A673 (cell line): ENCODE measurements at regions of chr16 and their contacts with region 1.

Region 1: DNA sequence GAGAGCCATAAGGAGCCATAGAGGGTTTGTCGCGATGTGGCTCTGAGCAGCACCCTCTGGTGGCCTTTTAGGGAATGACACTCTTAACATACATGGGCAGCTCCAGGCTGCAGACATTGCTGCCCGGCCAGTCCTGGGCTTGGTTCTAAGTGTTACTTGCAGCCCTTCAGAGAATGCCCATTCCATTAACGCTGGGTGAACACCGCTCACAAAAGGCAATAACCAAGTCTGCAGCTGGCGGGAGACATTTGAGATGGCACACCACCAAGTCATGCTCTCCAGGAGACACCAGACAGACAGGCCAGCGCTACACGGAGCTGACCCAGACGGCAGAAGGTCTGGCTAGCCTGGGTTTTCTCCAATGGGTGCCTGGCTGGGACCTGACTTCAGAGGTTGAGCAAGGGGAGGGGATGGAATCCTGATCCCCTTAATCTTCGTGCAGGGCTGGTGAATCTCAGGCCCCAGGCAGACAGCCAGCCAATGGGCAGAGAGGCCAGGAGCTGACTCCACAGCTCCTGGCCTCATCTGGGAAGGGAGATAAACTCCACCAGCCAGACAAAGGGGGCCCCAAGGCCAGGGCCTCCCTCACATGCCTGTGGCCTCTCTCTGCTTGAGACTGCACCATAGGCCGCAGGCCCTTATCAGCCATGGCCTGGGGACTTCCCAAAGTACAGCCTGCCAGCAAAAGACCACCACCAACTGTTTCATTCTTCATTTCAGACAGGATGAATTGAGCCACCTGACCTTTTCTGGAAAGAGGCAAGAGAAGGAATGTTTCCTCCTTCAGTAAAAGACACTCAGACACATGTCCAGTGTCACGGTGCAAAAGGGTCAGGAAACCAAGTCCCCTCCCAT is 58.8 kb downstream of the ZDHHC7 start:
- DNase-seq: peak; percentile 83
- H3K4me3 ChIP-seq: no peak overlapping the region
- H3K27ac ChIP-seq: no peak overlapping the region
- H3K4me1 ChIP-seq: no peaks in the 10 kb centered on the region
- H3K27me3 ChIP-seq: no peaks in the 10 kb centered on the region
- CTCF ChIP-seq: peak; percentile 79

Region 2: GRCh38 chr16:84617791-84618580 is 334.6 kb before region 1 on chr16 and contains the start of gene COTL1:
- CTCF ChIA-PET with region 1: interaction called, 5 read pairs
- POLR2A ChIA-PET with region 1: no interaction called
- intact Hi-C with region 1: loop called (anchors 1 kb)
- DNase-seq: peak; percentile 98
- H3K4me3 ChIP-seq: peak within 1 kb of the TSS; percentile 68
- H3K27ac ChIP-seq: no peak within 1 kb of the TSS
- H3K4me1 ChIP-seq: peaks cover 25% of the 10 kb centered on the region
- H3K27me3 ChIP-seq: no peaks in the 10 kb centered on the region
- CTCF ChIP-seq: no peak
- total RNA-seq, gene COTL1: 34.1 and 35.9 TPM in 2 replicates

Region 3: DNA sequence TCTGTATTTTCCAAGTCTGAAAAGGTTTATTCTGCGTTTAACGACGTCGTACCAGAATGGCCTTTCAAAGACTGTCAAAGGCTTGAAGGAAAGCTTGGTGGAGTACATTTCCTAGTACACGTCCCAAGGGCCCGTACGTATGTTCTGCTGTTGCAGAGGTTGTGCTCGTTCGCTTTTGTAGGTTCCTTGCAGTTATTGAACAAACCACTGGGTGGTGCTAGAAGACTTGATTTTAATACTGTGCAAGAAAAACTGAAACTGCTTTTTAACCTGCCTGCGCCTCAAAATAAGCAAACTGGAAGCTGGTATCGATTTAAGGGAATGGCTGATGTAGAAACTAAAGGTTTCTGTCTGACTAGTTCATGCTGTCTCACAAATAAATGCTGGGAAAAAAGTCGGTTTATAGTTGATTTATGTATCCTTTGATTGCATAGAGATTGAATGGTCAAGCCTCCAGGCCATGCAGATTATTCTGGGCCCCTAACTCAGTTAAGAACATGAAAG is 198.2 kb before region 1 on chr16:
- CTCF ChIA-PET with region 1: interaction called, 14 read pairs
- POLR2A ChIA-PET with region 1: no interaction called
- intact Hi-C with region 1: loop called (anchors 1 kb)
- DNase-seq: peak; percentile 92
- H3K4me3 ChIP-seq: no peak overlapping the region
- H3K27ac ChIP-seq: peak overlapping the region; percentile 40
- H3K4me1 ChIP-seq: peaks cover 28% of the 10 kb centered on the region
- H3K27me3 ChIP-seq: no peaks in the 10 kb centered on the region
- CTCF ChIP-seq: peak; percentile 85

Region 4: GRCh38 chr16:84925092-84925772 is 27.3 kb before region 1 on chr16:
- CTCF ChIA-PET with region 1: interaction called, 3 read pairs
- POLR2A ChIA-PET with region 1: no interaction called
- intact Hi-C with region 1: loop called (anchors 1 kb)
- DNase-seq: peak; percentile 41
- H3K4me3 ChIP-seq: no peak overlapping the region
- H3K27ac ChIP-seq: no peak overlapping the region
- H3K4me1 ChIP-seq: no peaks in the 10 kb centered on the region
- H3K27me3 ChIP-seq: no peaks in the 10 kb centered on the region
- CTCF ChIP-seq: peak; percentile 80